OCI-LY7 (cell line): ENCODE measurements at regions of chr4 and their contacts with region 1.

Region 1: DNA sequence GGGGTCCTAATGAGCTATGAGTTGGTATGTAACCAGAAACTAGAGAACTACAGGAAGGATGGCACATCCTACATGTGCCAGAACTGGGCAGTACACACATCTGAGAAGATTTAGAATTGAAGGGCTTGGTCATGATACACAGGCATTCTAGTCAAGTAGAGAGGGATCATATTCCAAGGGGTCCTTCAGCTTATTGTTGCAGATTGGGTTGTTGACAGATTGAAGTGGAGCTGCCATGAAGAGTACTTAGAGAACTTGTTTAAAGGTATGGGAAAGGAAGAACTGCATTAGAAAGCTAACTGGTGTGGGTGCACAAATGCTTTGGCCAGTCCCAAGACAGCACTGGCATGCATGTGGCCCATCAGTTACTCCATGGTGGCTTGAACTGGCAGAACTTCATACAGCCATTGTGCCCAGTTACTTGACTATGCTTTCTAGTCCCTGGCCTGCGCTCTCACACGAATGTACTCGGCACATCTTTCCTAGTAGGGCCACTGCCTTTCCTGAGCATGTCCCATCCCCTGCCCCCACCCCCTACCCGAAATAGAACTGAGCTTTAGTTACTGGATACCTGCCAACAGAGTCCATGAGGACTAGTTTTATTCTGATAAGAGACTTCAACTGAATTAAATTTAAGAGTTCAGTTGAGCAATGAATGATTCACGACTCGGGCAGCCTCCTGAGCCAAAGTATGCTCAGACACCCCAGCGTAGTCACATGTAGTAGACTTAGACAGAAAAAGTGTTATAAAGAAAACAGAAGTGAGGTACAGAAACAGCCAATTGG is 64.0 kb downstream of the CCNG2 start:
- DNase-seq: no peak
- H3K4me3 ChIP-seq: no peak overlapping the region
- H3K27ac ChIP-seq: no peak overlapping the region
- H3K4me1 ChIP-seq: no peaks in the 10 kb centered on the region
- CTCF ChIP-seq: no peak

Region 2: GRCh38 chr4:76977736-76978350 is 243.2 kb before region 1 on chr4:
- CTCF ChIA-PET with region 1: interaction called, 13 read pairs
- POLR2A ChIA-PET with region 1: no interaction called
- intact Hi-C with region 1: no loop called
- DNase-seq: no peak
- H3K4me3 ChIP-seq: no peak overlapping the region
- H3K27ac ChIP-seq: no peak overlapping the region
- H3K4me1 ChIP-seq: no peaks in the 10 kb centered on the region
- CTCF ChIP-seq: no peak

Region 3: GRCh38 chr4:77240469-77241066 is 19.5 kb after region 1 on chr4:
- CTCF ChIA-PET with region 1: no interaction called
- POLR2A ChIA-PET with region 1: no interaction called
- intact Hi-C with region 1: no loop called
- DNase-seq: peak; percentile 72
- H3K4me3 ChIP-seq: no peak overlapping the region
- H3K27ac ChIP-seq: no peak overlapping the region
- H3K4me1 ChIP-seq: peaks cover 2% of the 10 kb centered on the region
- CTCF ChIP-seq: peak; percentile 95

Region 4: DNA sequence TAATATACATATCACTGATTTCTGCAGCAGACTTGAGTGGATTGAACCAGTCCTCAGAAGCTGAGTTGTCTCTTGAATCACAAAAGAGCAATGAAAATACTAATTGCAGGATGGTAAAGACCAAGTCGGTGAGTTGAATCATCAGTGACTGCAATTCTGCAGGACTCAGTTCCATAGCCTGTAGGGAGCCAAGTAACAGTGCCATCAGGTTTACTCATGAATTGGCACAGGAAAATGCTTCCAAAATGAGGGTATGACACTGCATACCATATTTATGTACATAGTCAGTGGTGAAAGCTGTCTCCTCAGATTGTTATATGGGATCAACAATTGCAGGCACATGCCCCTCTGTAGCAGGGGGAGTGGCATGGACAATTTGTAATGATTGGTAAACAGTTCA is 128.8 kb after region 1 on chr4:
- CTCF ChIA-PET with region 1: no interaction called
- POLR2A ChIA-PET with region 1: no interaction called
- intact Hi-C with region 1: no loop called
- DNase-seq: no peak
- H3K4me3 ChIP-seq: no peak overlapping the region
- H3K27ac ChIP-seq: no peak overlapping the region
- H3K4me1 ChIP-seq: no peaks in the 10 kb centered on the region
- CTCF ChIP-seq: no peak